CD8-positive, alpha-beta T cell (primary cell): ENCODE measurements at regions of chr7 and their contacts with region 1.

Region 1: DNA sequence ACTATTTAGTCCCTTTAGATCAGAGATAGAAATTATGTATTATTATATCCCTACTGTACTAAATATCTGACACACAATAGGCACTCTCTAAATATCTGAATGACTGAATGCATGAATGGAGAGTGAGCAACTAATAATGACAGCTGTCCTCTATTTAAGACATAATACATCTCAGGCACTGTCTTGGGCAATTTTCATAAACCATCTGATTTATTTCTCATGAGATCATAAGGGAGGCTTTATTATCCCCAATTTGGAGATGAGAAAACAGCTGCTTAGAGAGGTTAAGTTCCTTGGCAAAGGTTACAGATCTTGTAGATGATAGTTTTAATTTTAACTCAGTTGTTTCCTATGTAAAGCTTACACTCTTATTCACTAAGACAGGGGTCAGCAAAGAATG is 570.6 kb downstream of the GRM8 start:
- DNase-seq: no peak
- ATAC-seq: no peak
- H3K4me3 ChIP-seq: no peak overlapping the region
- H3K4me3 Mint-ChIP-seq: no peak overlapping the region
- H3K27ac ChIP-seq: no peak overlapping the region
- H3K27ac Mint-ChIP-seq: no peak overlapping the region
- H3K4me1 ChIP-seq: no peaks in the 10 kb centered on the region
- H3K4me1 Mint-ChIP-seq: no peaks in the 10 kb centered on the region
- H3K27me3 ChIP-seq: no peaks in the 10 kb centered on the region
- H3K27me3 Mint-ChIP-seq: no peaks in the 10 kb centered on the region
- CTCF ChIP-seq: no peak

Region 2: DNA sequence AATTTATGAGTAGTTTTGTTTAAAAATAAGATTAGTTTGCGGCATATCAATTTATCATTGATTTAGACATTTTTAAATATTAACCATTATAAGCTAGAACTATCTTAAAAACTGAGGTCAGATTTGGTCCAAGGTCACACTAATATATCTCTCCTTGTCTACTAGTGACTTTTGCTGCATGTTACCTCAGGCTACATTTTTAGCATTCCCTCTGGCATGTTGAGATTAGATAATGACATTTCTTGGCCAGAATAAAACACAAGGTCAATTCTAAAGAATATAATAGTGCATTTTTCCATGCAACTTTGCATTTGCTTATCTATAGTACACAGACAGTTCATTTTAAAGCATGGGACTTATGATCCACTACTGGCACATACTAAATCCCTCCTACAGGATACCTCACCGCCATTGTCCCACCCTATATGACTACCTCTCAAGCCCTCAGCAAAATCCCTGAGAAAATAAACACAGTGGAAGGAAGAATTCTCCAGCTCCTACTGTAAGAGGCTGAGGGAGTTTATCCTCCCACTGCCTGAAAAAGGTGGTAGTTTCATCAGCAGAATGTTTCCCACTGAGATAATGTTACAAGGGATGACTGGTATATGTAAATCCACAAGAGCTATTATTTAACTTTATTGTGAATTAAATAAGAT is 245.8 kb before region 1 on chr7:
- CTCF ChIA-PET with region 1: no interaction called
- POLR2A ChIA-PET with region 1: no interaction called
- intact Hi-C with region 1: loop called in 1 of 2 experiments (anchors 5 kb)
- DNase-seq: no peak
- ATAC-seq: no peak
- H3K4me3 ChIP-seq: no peak overlapping the region
- H3K4me3 Mint-ChIP-seq: no peak overlapping the region
- H3K27ac ChIP-seq: no peak overlapping the region
- H3K27ac Mint-ChIP-seq: no peak overlapping the region
- H3K4me1 ChIP-seq: no peaks in the 10 kb centered on the region
- H3K4me1 Mint-ChIP-seq: no peaks in the 10 kb centered on the region
- H3K27me3 ChIP-seq: no peaks in the 10 kb centered on the region
- H3K27me3 Mint-ChIP-seq: no peaks in the 10 kb centered on the region
- CTCF ChIP-seq: no peak

Region 3: GRCh38 chr7:126657599-126658358 is 24.4 kb before region 1 on chr7:
- CTCF ChIA-PET with region 1: no interaction called
- POLR2A ChIA-PET with region 1: no interaction called
- intact Hi-C with region 1: no loop called
- DNase-seq: peak in 1 of 9 experiments; percentile 1
- ATAC-seq: no peak
- H3K4me3 ChIP-seq: no peak overlapping the region
- H3K4me3 Mint-ChIP-seq: no peak overlapping the region
- H3K27ac ChIP-seq: no peak overlapping the region
- H3K27ac Mint-ChIP-seq: no peak overlapping the region
- H3K4me1 ChIP-seq: no peaks in the 10 kb centered on the region
- H3K4me1 Mint-ChIP-seq: no peaks in the 10 kb centered on the region
- H3K27me3 ChIP-seq: no peaks in the 10 kb centered on the region
- H3K27me3 Mint-ChIP-seq: no peaks in the 10 kb centered on the region
- CTCF ChIP-seq: no peak

Region 4: GRCh38 chr7:126696256-126697038 is 14.3 kb after region 1 on chr7:
- CTCF ChIA-PET with region 1: no interaction called
- POLR2A ChIA-PET with region 1: no interaction called
- intact Hi-C with region 1: no loop called
- DNase-seq: no peak
- ATAC-seq: no peak
- H3K4me3 ChIP-seq: no peak overlapping the region
- H3K4me3 Mint-ChIP-seq: no peak overlapping the region
- H3K27ac ChIP-seq: no peak overlapping the region
- H3K27ac Mint-ChIP-seq: no peak overlapping the region
- H3K4me1 ChIP-seq: no peaks in the 10 kb centered on the region
- H3K4me1 Mint-ChIP-seq: no peaks in the 10 kb centered on the region
- H3K27me3 ChIP-seq: no peaks in the 10 kb centered on the region
- H3K27me3 Mint-ChIP-seq: peaks cover 3% of the 10 kb centered on the region
- CTCF ChIP-seq: no peak